Posterior vena cava (tissue), 2 donors: ENCODE measurements at regions of chr18 and their contacts with region 1.

Region 1: DNA sequence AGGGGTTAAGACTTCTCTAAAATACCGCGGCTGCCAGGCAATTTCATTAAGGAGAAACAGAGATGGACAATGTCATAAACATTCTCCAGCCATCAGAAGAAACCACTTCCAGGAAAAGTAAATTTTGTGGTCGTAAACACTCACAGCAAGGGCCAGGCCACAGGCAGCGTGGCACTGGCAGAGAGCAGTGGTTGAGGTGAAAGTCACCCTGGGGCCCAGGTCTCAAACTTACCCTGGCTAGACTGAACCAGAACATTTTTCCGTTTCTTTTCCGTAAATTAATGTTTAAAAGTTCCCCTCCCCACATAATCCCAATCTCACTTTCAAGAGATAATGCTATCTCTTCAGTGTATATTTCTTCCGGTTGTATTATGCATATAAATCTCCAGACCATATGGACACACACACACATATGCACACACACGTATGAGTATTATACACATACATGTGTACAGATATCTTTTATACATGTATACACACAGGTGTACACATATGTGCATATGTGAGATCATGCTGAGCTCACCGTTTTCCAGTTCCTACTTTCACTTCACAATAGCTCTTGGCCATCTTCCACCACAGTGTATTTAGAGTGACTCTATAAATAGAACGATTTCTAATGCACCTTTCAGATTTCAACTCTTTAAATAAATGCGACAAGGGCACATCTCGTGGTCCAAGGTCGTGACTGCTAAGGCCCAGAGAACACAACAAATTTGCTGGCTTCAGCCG is 90.1 kb downstream of the MALT1 start:
- DNase-seq: peak; percentile 20

Region 2: DNA sequence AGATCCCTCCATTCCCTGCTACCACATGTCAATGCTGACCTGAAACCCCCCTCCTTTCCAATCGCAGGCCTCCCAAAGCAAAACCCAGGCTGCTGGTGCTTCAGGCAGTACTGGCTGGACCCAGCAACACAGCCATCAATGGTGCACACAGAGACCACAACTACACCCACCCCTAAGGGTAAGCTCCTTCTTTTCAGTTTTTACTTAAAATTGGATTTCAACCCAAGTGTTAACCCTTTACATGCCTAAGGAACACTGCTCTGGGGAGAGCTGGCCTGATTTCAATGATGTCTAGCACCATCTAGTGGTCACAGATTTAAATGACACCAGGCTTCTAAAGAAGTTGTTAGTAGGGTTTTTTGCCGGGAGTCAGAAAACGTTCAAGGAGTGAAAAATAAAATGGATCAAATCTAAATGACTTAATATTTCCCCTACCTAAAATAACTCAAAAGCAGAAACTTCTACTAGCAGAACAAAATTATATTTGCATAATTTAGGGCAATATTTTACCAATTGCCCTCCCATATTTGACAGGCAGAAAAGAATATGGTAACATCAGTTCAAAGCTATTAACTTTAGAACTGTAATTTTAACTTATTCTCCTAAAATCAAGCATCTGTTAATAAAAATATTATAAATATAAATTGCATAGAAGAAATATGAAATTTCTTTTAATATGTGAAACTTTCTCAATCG is 1199.5 kb before region 1 on chr18:
- intact Hi-C with region 1: no loop called
- DNase-seq: no peak

Region 3: DNA sequence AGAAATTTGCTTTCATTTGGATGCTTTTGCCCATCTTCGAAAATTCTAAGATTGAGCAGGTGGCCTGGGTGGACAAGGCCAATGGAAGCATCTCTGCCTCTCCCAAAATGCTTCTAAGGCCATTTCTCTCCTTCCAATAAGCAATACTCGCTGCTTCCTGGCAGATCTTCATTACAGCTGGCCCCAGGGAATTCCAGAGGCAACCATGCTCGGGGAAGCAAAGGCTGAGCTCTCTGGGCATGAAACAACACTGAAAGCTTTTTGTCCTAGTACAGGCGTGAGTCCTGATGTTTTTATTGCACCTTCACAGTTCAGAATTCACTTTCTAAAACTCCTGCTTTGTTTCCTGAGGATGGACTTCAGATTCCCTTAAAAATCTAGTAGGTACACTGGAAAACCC is 729.2 kb before region 1 on chr18:
- intact Hi-C with region 1: loop called in 1 of 2 experiments (anchors 5 kb)
- DNase-seq: no peak

Region 4: GRCh38 chr18:58785171-58785805 is 23.9 kb after region 1 on chr18:
- intact Hi-C with region 1: no loop called
- DNase-seq: no peak